ENCODE measurements at regions of chr6 and their contacts with region 1.

Region 1: DNA sequence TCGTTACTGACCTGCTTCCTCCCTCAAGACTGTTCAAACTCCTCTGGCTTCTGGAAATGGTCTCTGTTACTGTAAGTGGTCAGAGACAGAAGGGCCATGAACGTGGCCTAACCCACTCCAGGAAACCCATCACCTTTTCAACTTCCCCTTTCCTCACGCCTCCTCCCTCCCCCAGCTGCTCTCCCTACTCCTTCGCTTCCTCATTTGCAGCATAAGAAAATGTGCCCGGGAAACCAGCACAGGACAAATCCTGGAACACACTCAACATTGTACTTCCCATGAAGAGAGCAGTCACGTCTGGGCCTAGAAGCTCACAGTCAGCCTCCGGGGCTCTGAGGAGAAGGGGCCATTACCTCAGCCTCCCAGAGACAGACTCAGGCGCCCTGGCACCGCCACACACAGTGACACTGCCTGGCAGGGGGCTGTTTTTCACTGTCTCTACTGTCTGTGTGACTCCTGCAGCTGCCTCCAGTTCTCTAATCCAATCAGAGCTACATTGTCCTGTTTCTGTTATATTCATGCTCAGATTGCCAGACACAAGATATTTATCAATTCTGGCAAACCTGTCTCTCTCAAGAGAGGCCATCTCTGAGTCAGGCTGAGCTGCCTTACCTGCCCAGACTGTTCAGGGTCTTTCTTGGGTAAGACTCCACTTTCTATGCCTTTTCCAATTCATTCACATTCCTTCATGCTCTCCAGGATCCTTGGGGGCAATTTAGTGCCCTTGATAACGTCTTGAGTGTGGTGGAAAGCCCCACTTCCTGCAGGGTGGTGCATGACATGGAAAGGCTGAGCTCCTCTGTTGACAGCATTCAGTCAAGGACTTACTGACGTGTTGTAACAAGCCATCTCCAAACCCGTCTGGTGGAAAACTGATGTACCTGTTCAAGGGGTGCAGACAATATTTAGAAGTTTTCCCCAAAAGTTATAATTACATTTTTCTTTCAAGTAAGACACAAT is 242.2 kb downstream of the HIVEP2 start:
- DNase-seq: no peak
- ATAC-seq: peak; percentile 53
- H3K4me3 ChIP-seq: no peak overlapping the region
- H3K27ac ChIP-seq: no peak overlapping the region; the same call in 1 of the 2 replicates
- H3K4me1 ChIP-seq: peaks cover 14% of the 10 kb centered on the region
- H3K27me3 ChIP-seq: no peaks in the 10 kb centered on the region
- CTCF ChIP-seq: no peak
- EP300 ChIP-seq: no peak
- POLR2A ChIP-seq: no peak
- RAD21 ChIP-seq: no peak

Region 2: GRCh38 chr6:142716097-142716496 is 13.3 kb after region 1 on chr6:
- CTCF ChIA-PET with region 1: interaction called, 3 read pairs
- POLR2A ChIA-PET with region 1: interaction called, 4 read pairs
- RAD21 ChIA-PET with region 1: interaction called, 3 read pairs
- SMC1A ChIA-PET with region 1: interaction called, 10 read pairs
- in situ Hi-C with region 1: no loop called
- intact Hi-C with region 1: no loop called
- DNase-seq: no peak
- ATAC-seq: peak; percentile 51
- H3K4me3 ChIP-seq: no peak overlapping the region
- H3K27ac ChIP-seq: no peak overlapping the region
- H3K4me1 ChIP-seq: no peaks in the 10 kb centered on the region
- H3K27me3 ChIP-seq: no peaks in the 10 kb centered on the region
- CTCF ChIP-seq: no peak
- EP300 ChIP-seq: no peak
- POLR2A ChIP-seq: no peak
- RAD21 ChIP-seq: no peak

Region 3: GRCh38 chr6:143026696-143027449 is 324.1 kb after region 1 on chr6:
- CTCF ChIA-PET with region 1: interaction called, 18 read pairs
- POLR2A ChIA-PET with region 1: no interaction called
- RAD21 ChIA-PET with region 1: interaction called, 17 read pairs
- SMC1A ChIA-PET with region 1: interaction called, 123 read pairs
- in situ Hi-C with region 1: no loop called
- intact Hi-C with region 1: no loop called
- DNase-seq: no peak
- ATAC-seq: peak; percentile 76
- H3K4me3 ChIP-seq: no peak overlapping the region
- H3K27ac ChIP-seq: no peak overlapping the region
- H3K4me1 ChIP-seq: no peaks in the 10 kb centered on the region
- H3K27me3 ChIP-seq: no peaks in the 10 kb centered on the region
- CTCF ChIP-seq: peak; percentile 50 to 54 (median 50); a peak in 5 of 6 replicates
- EP300 ChIP-seq: no peak
- POLR2A ChIP-seq: no peak
- RAD21 ChIP-seq: peak; percentile 60